A549 (cell line): ENCODE measurements at regions of chr15 and their contacts with region 1.

Region 1: DNA sequence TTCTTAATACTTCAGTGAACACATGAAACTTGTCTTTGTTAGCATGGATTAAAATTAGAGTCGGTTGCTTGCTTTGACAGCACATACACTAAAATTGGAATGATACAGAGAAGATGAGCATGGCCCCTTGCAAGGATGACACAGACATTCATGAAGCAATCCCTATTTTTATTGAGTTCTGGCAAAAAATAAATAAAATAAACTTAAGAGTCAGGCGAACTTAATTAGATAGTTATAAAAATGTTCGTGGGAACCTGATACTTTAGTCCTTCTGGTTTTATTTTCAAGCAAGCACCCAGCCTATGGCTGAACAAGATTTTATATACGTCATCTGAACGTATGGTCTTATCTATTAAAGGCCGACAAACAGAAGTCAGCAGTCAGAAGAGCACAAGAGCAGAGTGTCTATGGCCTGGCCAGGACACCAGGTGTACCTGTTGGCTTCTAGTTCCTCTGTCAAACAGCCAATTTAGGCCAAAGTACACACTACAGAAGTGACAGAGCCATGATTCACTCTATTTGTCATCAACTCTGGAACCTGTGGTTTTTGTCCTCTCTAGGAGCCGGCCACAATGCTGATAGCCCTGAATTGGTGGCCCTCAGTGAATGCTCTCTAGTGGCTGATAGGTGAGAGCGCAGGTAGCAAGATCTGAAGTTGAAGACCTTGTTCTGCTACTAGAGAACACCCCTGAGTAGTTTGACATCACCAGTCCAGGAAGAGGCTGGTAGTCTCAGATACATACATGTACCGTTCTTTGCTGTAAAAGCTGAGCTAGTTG is 64.3 kb downstream of the LEO1 start:
- DNase-seq: peak; percentile 39 to 69
- ATAC-seq: peak; percentile 73 to 91
- H3K4me3 ChIP-seq: no peak overlapping the region
- H3K27ac ChIP-seq: peak overlapping the region in 1 of 2 experiments; percentile 47; a peak in 4 of 6 replicates
- H3K4me1 ChIP-seq: peaks cover 53% of the 10 kb centered on the region
- CTCF ChIP-seq: peak; percentile 22; the same call in 1 of the 3 replicates
- EP300 ChIP-seq: no peak
- POLR2A ChIP-seq: no peak
- RAD21 ChIP-seq: peak; percentile 41 to 42; a peak in 4 of 5 replicates

Region 2: DNA sequence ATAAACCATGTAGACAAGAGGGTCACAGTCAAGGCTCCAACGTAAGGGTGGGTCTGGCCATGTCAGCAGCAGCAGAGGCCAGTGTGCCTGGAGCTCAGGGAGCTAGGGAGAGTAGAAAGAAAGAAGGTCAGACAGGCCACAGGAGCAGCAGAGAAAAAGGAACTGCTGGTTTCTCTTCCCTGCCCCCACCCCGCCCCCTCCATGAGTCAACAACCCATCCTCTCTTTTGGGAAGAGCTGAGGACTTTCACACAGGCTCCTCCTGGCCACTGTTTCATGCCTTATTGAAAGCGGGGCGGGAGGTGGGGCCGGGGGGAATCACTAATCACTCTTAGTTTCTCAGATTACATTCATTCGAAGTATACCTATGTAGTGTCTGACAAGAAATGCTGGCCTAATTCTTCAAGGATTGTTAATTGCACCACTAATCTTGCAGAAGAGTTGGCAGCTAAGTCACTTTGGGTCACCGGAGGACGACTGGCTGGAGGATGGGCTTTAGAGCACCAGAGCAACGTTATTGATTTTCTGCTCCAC is 235.1 kb before region 1 on chr15:
- CTCF ChIA-PET with region 1: no interaction called
- POLR2A ChIA-PET with region 1: no interaction called
- DNase-seq: no peak
- ATAC-seq: no peak
- H3K4me3 ChIP-seq: no peak overlapping the region
- H3K27ac ChIP-seq: no peak overlapping the region
- H3K4me1 ChIP-seq: no peaks in the 10 kb centered on the region
- CTCF ChIP-seq: no peak
- EP300 ChIP-seq: no peak
- POLR2A ChIP-seq: no peak
- RAD21 ChIP-seq: no peak

Region 3: GRCh38 chr15:51829360-51830275 is 77.7 kb before region 1 on chr15 and contains the start of gene TMOD3:
- CTCF ChIA-PET with region 1: interaction called, 12 read pairs
- POLR2A ChIA-PET with region 1: interaction called, 5 read pairs
- DNase-seq: peak; percentile 95
- ATAC-seq: peak; percentile 91 to 96
- H3K4me3 ChIP-seq: peak within 1 kb of the TSS; percentile 70
- H3K27ac ChIP-seq: peak within 1 kb of the TSS; percentile 96 to 99
- H3K4me1 ChIP-seq: peaks cover 47% of the 10 kb centered on the region
- CTCF ChIP-seq: no peak
- EP300 ChIP-seq: no peak
- POLR2A ChIP-seq: peak; percentile 95
- RAD21 ChIP-seq: peak in 1 of 2 experiments; percentile 41; a peak in 3 of 5 replicates
- polyA plus RNA-seq, gene TMOD3: 93.2 and 111 TPM in 2 replicates

Region 4: GRCh38 chr15:51853998-51854397 is 53.3 kb before region 1 on chr15:
- CTCF ChIA-PET with region 1: interaction called, 12 read pairs
- POLR2A ChIA-PET with region 1: no interaction called
- DNase-seq: no peak
- ATAC-seq: peak in 1 of 2 experiments; percentile 17; a peak in 2 of 6 replicates
- H3K4me3 ChIP-seq: no peak overlapping the region
- H3K27ac ChIP-seq: peak overlapping the region; percentile 24 to 65; a peak in 4 of 6 replicates
- H3K4me1 ChIP-seq: peaks cover 95% of the 10 kb centered on the region
- CTCF ChIP-seq: no peak
- EP300 ChIP-seq: no peak
- POLR2A ChIP-seq: no peak
- RAD21 ChIP-seq: no peak

Region 5: DNA sequence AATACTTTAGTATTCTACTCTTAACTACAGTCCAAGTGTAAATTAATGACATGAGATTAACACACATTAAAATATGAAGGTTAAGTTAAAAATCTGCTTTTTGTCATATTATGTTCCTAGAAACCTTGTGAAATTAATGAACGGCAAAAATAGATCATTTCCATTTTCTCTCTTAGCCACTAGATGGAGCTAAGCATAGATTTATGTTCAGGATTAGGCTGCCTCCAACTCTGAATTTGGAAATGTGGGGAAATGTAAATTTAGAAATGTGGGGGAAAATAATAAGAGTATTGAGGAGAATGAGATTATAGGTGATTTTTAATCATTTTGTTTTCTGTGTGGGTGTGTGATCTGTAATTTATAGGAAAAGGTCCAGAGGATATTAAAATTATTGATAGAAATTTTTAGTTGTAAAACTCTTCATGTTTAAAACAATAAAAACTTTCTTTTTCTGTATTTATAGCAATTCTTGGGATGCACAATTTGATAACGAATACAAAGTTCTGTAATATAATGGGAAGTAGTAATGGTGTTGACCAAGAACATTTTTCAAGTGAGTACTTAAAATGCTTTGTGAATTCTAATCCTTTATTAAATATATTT is 18.6 kb before region 1 on chr15:
- CTCF ChIA-PET with region 1: interaction called, 52 read pairs
- POLR2A ChIA-PET with region 1: no interaction called
- DNase-seq: peak; percentile 46 to 51
- ATAC-seq: peak; percentile 60 to 69; a peak in 4 of 6 replicates
- H3K4me3 ChIP-seq: 0 out of 3 replicates have a peak overlapping the region, but pooled peaks have one; percentile 20
- H3K27ac ChIP-seq: peak overlapping the region; percentile 72 to 80
- H3K4me1 ChIP-seq: peaks cover 48% of the 10 kb centered on the region
- CTCF ChIP-seq: peak; percentile 85
- EP300 ChIP-seq: no peak
- POLR2A ChIP-seq: no peak
- RAD21 ChIP-seq: peak; percentile 61 to 68

Region 6: DNA sequence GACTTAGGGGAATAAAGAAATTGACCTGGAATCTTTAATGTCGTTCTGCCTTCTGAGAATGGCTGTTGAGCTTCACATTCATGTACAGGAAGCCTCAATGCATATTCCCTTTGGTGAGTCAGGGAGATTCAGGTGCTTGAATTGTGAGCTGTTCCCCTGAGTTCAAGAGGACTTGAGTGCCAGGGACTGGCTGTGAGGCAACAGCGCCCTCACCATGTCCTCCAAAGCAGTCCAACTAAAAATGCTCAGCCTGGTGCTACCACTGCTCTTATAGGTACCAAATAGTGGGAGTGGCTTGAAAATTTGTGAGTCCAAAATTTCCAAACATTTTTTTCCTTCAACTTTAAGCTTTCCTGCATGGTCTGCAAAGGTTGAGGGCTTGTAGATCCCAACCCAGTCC is 10.2 kb after region 1 on chr15:
- CTCF ChIA-PET with region 1: interaction called, 31 read pairs
- POLR2A ChIA-PET with region 1: no interaction called
- DNase-seq: peak; percentile 44 to 89
- ATAC-seq: peak; percentile 95 to 99
- H3K4me3 ChIP-seq: no peak overlapping the region
- H3K27ac ChIP-seq: no peak overlapping the region
- H3K4me1 ChIP-seq: peaks cover 4% of the 10 kb centered on the region; the same call in 1 of the 3 replicates
- CTCF ChIP-seq: peak; percentile 76
- EP300 ChIP-seq: no peak
- POLR2A ChIP-seq: no peak
- RAD21 ChIP-seq: peak; percentile 77 to 88

Region 7: GRCh38 chr15:51947124-51947523 is 39.8 kb after region 1 on chr15:
- CTCF ChIA-PET with region 1: no interaction called
- POLR2A ChIA-PET with region 1: no interaction called
- DNase-seq: no peak
- ATAC-seq: peak in 1 of 2 experiments; percentile 12; a peak in 1 of 6 replicates
- H3K4me3 ChIP-seq: no peak overlapping the region
- H3K27ac ChIP-seq: no peak overlapping the region
- H3K4me1 ChIP-seq: no peaks in the 10 kb centered on the region
- CTCF ChIP-seq: no peak
- EP300 ChIP-seq: no peak
- POLR2A ChIP-seq: no peak
- RAD21 ChIP-seq: no peak

Region 8: GRCh38 chr15:51982013-51982769 is 74.9 kb after region 1 on chr15:
- CTCF ChIA-PET with region 1: no interaction called
- POLR2A ChIA-PET with region 1: no interaction called
- DNase-seq: peak; percentile 83 to 89
- ATAC-seq: peak; percentile 94 to 96
- H3K4me3 ChIP-seq: peak overlapping the region; percentile 25; the same call in 2 of the 3 replicates
- H3K27ac ChIP-seq: peak overlapping the region; percentile 81 to 87
- H3K4me1 ChIP-seq: peaks cover 22% of the 10 kb centered on the region
- CTCF ChIP-seq: peak; percentile 97
- EP300 ChIP-seq: no peak
- POLR2A ChIP-seq: no peak
- RAD21 ChIP-seq: peak; percentile 96 to 98

Region 9: DNA sequence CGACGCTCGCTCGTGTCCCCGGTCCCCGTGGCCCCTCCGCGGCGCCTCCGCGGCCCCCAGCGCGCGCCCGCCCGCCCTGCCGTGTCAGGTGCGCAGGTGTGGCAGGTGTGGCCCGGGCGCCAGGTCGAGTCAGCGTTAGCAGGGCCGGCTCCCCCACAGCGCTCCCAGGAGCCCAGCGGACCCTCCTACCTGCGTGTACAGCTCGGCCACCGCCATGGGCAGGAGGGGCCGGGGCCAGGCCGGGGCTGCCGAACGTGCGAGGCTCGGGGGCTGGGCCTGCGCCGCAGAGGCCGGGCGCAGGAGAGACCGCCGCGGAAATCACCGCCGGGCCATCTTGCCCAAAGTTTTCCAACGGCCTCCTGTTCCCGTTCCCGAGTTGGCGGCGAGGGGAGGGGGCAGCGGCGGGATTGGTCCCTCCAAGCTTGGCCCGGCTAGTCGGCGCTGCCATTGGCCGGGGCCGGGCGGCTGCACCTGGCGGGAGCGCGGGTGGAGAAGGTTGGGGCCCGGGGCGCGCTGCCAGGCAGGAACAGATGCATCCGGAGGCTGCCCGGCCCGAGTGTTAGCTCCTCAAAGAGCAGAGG is 388.2 kb after region 1 on chr15 and contains the start of gene MYO5C:
- CTCF ChIA-PET with region 1: no interaction called
- POLR2A ChIA-PET with region 1: no interaction called
- DNase-seq: peak; percentile 83 to 86
- ATAC-seq: peak; percentile 90 to 95
- H3K4me3 ChIP-seq: peak within 1 kb of the TSS; percentile 76
- H3K27ac ChIP-seq: peak within 1 kb of the TSS; percentile 88 to 89
- H3K4me1 ChIP-seq: peaks cover 27% of the 10 kb centered on the region
- CTCF ChIP-seq: no peak
- EP300 ChIP-seq: no peak
- POLR2A ChIP-seq: no peak
- RAD21 ChIP-seq: no peak
- polyA plus RNA-seq, gene MYO5C: 26.9 and 27.6 TPM in 2 replicates